ENCODE measurements at regions of chr5 and their contacts with region 1.

Region 1: DNA sequence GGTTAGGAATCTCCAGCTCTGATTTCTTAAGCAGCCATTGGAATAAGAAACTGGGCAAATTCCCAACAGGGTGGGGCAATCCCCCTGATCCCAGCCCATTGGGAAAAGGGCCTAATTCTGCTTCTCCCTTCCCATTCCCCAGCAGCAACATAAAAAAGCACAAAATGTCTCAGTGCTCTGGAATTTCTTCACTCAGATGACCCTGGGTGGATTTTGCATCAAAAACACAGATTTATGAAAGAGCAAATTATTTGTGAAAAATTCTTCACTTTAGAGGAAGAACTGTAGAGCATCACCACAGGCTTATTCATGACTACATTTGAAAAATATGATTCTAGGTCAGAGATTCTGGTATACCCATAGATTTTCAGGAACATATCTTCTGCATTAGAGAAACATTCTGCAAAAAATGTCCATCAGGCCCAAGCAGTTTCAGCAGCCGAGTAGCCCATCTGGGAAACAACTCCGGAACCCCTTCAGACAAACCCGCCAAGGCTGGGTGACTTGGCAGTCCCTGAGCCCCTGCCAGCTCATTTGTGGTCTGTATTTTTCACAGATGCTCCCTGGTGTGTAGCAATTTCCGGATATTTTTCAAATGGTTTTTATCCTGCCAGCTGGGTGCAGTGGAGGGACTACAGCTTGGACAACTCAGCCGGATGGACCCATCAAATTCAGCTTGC is 102.1 kb upstream of the RANBP3L start:
- DNase-seq: peak in 3 of 10 donors; percentile 5 to 57 (median 43)
- H3K4me3 ChIP-seq: no peak overlapping the region
- H3K27ac ChIP-seq: peak overlapping the region in 27 of 59 donors; percentile 1 to 64 (median 36)
- H3K27me3 ChIP-seq: no peaks in the 10 kb centered on the region
- CTCF ChIP-seq: no peak

Region 2: GRCh38 chr5:35904443-35905132 is 499.2 kb before region 1 on chr5:
- intact Hi-C with region 1: no loop called
- DNase-seq: no peak
- H3K4me3 ChIP-seq: no peak overlapping the region
- H3K27ac ChIP-seq: no peak overlapping the region
- H3K27me3 ChIP-seq: no peaks in the 10 kb centered on the region
- CTCF ChIP-seq: no peak

Region 3: DNA sequence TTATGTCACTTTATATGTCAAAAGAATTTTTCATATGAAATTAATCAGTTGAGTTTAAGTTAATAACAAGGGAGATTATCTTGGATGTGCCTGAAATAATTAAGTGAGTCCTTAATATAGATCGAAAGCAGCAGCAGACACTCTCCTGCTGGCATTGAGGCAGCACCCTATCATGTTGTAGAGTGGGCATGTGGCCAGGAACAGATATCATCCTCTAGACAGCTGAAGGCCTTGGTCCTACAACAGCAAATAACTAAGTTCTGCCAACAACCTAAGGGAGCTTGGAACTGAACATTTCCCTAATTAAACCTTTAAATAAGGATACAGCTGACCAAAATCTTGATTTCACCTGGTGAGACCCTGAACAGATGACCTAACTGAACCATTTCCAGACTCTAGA is 386.8 kb before region 1 on chr5:
- intact Hi-C with region 1: no loop called
- DNase-seq: no peak
- H3K4me3 ChIP-seq: no peak overlapping the region
- H3K27ac ChIP-seq: no peak overlapping the region
- H3K27me3 ChIP-seq: peaks cover 0 to 3% (median 0%) of the 10 kb centered on the region in 45 donors
- CTCF ChIP-seq: no peak

Region 4: DNA sequence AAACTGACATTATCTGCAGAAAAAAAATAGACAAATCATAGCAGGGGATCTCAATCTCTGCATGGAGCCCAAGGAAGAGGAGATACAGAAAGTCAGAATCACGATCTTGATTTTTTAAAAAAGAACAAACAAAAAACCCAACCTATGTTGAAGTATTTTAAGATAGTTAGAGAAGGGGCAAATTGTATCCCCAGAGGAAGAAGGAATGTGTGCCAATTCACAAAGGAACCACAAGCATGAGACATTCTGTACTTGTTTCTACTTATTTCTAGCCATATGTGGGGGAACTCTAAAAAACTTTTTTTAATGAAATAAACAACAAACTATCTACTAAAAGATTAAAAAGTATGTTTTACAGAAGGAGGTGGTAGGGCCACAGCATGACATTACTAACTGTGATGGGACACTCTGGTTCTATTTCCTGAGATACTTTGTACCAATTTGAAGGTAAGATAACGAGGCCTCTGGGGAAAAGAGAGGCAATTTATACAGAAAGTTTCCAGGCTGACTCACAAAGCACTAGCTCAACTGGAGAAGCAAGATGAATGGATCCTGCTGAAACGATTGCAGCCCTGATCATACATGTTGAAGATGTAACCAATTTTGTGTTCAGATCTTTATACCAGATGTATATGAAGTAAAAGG is 124.6 kb before region 1 on chr5:
- intact Hi-C with region 1: loop called in 1 of 2 experiments (anchors 10 kb)
- DNase-seq: no peak
- H3K4me3 ChIP-seq: no peak overlapping the region
- H3K27ac ChIP-seq: peak overlapping the region in 43 of 59 donors; percentile 1 to 77 (median 49)
- H3K27me3 ChIP-seq: no peaks in the 10 kb centered on the region
- CTCF ChIP-seq: no peak

Region 5: DNA sequence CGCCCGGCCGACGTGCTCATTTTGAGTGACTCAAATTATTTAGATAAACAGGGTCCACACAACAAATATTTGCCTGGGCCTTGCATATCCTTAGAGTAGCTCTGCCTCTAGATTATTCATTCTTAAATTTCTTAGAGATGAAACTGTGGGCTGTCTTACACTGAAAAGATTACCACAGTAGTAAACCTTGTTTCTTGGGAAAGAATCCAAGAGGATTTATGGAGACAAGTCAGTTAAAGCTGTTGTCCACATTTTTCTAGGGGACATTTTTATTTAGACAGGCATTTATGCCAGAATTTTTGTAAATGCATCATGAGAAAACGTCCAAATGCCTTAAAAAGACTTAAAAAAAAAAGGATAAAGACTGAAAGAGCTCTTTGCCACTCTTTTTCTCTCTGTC is 69.5 kb before region 1 on chr5:
- intact Hi-C with region 1: no loop called
- DNase-seq: no peak
- H3K4me3 ChIP-seq: no peak overlapping the region
- H3K27ac ChIP-seq: no peak overlapping the region
- H3K27me3 ChIP-seq: peaks cover 0 to 4% (median 0%) of the 10 kb centered on the region in 45 donors
- CTCF ChIP-seq: no peak